A549 (cell line): ENCODE measurements at regions of chr5 and their contacts with region 1.

Region 1: GRCh38 chr5:134289509-134290113 is 63.7 kb upstream of the PPP2CA start:
- DNase-seq: peak; percentile 75 to 87
- ATAC-seq: peak; percentile 99
- H3K4me3 ChIP-seq: no peak overlapping the region
- H3K27ac ChIP-seq: no peak overlapping the region
- H3K4me1 ChIP-seq: no peaks in the 10 kb centered on the region; the same call in 2 of the 3 replicates
- CTCF ChIP-seq: peak; percentile 97
- EP300 ChIP-seq: no peak
- POLR2A ChIP-seq: no peak
- RAD21 ChIP-seq: peak; percentile 99

Region 2: DNA sequence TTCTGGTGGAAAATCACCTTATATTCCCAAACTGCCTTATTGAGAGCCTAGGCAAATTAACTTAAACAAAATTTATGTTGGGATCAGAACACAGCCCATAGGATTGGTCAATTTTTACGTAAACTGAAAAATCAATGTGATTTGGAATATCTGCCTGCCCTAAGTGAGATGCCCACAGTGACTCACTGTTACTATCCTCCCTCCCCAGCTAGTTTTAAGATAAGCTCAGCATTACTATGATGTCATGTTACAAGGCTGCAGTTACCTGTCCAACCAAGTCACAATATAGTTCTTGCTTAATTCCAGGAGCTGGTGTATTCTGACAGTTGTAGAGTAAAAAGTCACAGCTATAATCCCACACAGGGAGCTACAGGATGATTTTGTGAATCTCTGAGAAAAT is 136.0 kb before region 1 on chr5:
- CTCF ChIA-PET with region 1: interaction called, 14 read pairs
- POLR2A ChIA-PET with region 1: no interaction called
- DNase-seq: no peak
- ATAC-seq: no peak
- H3K4me3 ChIP-seq: no peak overlapping the region
- H3K27ac ChIP-seq: no peak overlapping the region
- H3K4me1 ChIP-seq: no peaks in the 10 kb centered on the region
- CTCF ChIP-seq: no peak
- EP300 ChIP-seq: no peak
- POLR2A ChIP-seq: no peak
- RAD21 ChIP-seq: no peak

Region 3: DNA sequence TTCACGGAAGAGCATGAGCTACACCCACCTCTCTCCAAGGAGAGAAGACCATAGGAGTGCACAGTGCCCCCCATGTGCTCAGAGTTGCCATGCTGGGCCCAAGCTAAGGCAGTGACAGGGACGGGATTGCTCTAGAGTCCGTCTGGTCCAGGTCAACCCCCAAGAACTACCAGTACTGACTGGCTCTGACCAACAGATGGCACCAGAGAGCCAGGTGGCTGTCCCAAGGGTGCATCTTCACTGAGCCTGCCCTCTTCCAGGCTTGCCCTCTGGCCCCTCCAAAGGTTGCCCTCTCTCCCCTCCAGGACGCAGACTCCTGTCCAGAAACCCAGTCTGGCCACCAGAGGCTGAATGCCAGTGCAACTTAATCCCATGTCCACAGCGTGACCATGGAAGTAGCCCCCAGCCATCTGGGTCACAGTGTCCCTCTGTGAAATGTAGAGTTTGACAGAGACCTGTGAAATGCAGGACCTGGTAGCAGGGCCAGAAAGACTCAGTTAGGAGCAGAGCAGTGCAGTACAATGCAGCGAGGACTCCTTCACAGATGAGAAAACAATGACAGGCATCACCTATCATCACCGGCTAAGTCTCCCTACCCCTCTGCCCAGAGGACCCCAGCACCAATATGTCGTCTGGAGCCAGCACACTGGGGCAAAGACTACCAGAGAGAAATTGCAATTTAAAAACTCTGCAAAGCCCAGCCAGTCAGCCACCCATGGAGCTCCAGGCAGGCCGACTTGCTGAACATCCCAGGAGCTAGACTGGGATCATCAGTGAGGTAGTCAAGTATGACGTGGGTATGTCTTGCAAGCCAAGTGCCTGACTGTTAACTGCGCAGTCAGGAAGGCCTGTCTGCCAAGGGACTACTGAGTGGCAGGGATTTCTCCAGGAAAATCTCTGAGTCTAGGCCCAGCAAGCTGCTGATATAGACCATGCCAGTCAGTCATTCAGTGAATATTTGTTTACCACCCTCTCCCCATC is 105.2 kb before region 1 on chr5:
- CTCF ChIA-PET with region 1: interaction called, 345 read pairs
- POLR2A ChIA-PET with region 1: interaction called, 3 read pairs
- DNase-seq: peak; percentile 73 to 87
- ATAC-seq: peak; percentile 87 to 95
- H3K4me3 ChIP-seq: no peak overlapping the region
- H3K27ac ChIP-seq: no peak overlapping the region
- H3K4me1 ChIP-seq: no peaks in the 10 kb centered on the region
- CTCF ChIP-seq: peak; percentile 90
- EP300 ChIP-seq: no peak
- POLR2A ChIP-seq: no peak
- RAD21 ChIP-seq: peak; percentile 94 to 97

Region 4: DNA sequence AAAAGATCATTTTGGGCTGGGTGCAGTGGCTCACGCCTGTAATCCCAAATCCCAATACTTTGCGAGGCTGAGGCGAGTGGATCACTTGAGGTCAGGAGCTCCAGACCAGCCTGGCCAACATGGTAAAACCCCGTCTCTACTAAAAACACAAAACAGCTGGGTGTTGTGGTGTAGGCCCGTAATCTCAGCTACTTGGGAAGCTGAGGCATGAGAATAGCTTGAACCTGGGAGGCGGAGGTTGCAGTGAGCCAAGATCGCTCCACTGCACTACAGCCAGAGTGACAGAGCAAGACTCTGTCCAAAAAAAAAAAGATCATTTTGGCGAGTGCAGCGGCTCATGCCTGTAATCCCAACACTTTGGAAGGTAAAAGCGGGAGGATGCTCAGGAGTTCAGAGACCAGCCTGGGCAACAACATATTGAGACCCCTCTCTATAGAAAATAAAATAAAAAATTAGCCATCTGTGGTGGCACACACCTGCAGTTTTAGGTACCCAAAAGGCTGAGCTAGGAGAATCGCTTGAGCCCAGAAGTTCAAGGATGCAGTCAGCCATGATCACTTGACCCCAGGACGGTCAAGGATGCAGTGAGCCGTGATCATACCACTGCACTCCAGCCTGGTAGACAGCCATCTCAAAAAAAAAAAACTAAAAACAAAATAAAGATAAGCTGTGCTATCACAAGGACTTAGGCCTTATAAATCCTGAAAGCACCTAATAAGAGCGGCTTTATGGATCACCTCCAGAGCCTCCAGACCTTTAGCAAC is 80.0 kb before region 1 on chr5:
- CTCF ChIA-PET with region 1: interaction called, 17 read pairs
- POLR2A ChIA-PET with region 1: no interaction called
- DNase-seq: no peak
- ATAC-seq: no peak
- H3K4me3 ChIP-seq: no peak overlapping the region
- H3K27ac ChIP-seq: no peak overlapping the region
- H3K4me1 ChIP-seq: no peaks in the 10 kb centered on the region
- CTCF ChIP-seq: no peak
- EP300 ChIP-seq: no peak
- POLR2A ChIP-seq: no peak
- RAD21 ChIP-seq: no peak

Region 5: DNA sequence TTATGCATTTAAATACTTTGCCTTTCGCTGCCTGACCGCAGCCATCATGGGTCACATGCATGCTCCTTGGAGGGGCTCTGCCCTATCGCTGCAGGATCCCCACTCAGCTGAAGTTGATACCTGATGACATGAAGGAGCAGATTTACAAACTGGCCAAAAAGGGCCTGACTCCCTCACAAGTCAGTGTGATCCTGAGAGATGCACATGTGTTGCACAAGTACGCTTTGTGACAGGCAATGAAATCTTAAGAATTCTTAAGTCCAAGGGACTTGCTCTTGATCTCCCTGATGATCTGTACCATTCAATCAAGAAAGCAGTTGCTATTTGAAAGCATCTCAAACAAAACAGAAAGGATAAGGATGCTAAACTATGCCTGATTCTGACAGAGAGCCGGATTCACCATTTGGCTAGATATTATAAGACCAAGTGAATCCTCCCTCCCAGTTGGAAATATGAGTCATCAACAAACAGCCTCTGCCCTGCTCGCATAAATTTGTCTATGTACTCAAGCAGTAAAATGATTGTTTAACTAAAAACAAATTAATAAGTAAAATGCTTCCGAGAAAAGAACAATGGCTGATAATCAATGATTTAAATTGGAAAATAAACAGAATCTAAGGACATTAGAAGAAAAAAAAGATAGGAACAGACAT is 22.1 kb before region 1 on chr5:
- CTCF ChIA-PET with region 1: interaction called, 15 read pairs
- POLR2A ChIA-PET with region 1: no interaction called
- DNase-seq: peak in 1 of 2 experiments; percentile 40
- ATAC-seq: peak; percentile 83 to 88
- H3K4me3 ChIP-seq: no peak overlapping the region
- H3K27ac ChIP-seq: no peak overlapping the region
- H3K4me1 ChIP-seq: peaks cover 13% of the 10 kb centered on the region; the same call in 2 of the 3 replicates
- CTCF ChIP-seq: no peak
- EP300 ChIP-seq: no peak
- POLR2A ChIP-seq: no peak
- RAD21 ChIP-seq: no peak